Mucosa of descending colon (tissue), 3 donors: ENCODE measurements at regions of chr6 and their contacts with region 1.

Region 1: GRCh38 chr6:33771146-33772081 is 17.5 kb downstream of the LEMD2 start:
- DNase-seq: peak; percentile 71 to 79 (median 74)
- ATAC-seq: peak; percentile 88
- H3K4me3 ChIP-seq: no peak overlapping the region
- H3K4me1 ChIP-seq: peaks cover 6% of the 10 kb centered on the region
- CTCF ChIP-seq: peak; percentile 94

Region 2: GRCh38 chr6:33711140-33712129 is 60.0 kb before region 1 on chr6 and contains the start of gene UQCC2:
- intact Hi-C with region 1: loop called in 1 of 2 experiments (anchors 10 kb)
- DNase-seq: peak; percentile 97 to 98 (median 98)
- ATAC-seq: peak; percentile 99
- H3K4me3 ChIP-seq: peak within 1 kb of the TSS; percentile 76
- H3K4me1 ChIP-seq: peaks cover 8% of the 10 kb centered on the region
- CTCF ChIP-seq: peak; percentile 65
- total RNA-seq, gene UQCC2: 41.8 to 48.6 (median 45.7) TPM

Region 3: GRCh38 chr6:34027445-34027936 is 256.1 kb after region 1 on chr6:
- intact Hi-C with region 1: loop called (anchors 5 to 10 kb)
- DNase-seq: peak; percentile 55 to 82 (median 77)
- ATAC-seq: peak; percentile 84
- H3K4me3 ChIP-seq: no peak overlapping the region
- H3K4me1 ChIP-seq: peaks cover 5% of the 10 kb centered on the region
- CTCF ChIP-seq: peak; percentile 74

Region 4: GRCh38 chr6:34154668-34155447 is 383.4 kb after region 1 on chr6:
- intact Hi-C with region 1: loop called (anchors 5 to 10 kb)
- DNase-seq: peak in 2 of 3 donors; percentile 57 to 69
- ATAC-seq: peak; percentile 83
- H3K4me3 ChIP-seq: no peak overlapping the region
- H3K4me1 ChIP-seq: peaks cover 8% of the 10 kb centered on the region
- CTCF ChIP-seq: peak; percentile 93